ENCODE measurements at regions of chr9 and their contacts with region 1.

Region 1: DNA sequence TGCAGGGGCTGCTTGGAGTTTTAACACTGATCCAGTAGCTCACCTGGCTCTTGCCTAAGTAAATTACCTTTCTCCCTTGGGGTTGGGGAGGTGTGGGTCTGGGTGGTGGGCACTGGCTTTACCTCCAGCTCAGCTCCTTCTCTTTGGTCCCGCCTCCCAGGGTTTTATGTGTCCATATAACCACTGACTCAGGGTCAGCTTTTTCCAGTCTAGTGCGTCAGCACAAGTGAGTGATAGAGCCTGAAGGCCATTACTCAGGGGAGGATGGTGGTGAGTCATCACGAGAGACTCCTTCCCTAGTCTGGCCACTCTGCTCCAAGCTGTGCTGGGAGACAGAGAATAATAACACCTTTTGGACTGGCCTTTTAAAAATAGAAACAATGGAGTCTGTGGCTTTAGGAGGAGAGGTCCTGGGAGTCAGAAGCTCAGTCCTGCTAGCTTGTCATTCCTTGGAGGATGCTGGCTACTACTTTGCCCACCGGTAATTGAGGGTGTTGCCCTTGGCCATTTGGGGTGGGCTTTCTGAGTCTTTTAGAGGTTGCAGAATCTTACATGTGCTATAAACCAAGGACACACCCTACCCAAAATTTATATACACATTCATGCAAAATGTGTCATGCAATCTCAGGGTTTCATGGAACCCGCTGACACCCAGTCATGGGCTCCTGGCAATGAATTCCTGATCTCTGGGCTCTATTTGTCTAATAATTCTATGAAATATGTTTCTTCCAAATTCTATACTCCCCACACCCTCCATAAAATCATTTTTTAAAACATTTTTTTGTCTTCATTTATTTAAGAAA is 35.5 kb upstream of the ATP6V1G1 start:
- DNase-seq: peak in 1 of 9 experiments; percentile 15
- ATAC-seq: no peak
- H3K4me3 ChIP-seq: no peak overlapping the region
- H3K4me3 Mint-ChIP-seq: no peak overlapping the region
- H3K27ac ChIP-seq: no peak overlapping the region
- H3K27ac Mint-ChIP-seq: no peak overlapping the region
- H3K4me1 ChIP-seq: no peaks in the 10 kb centered on the region
- H3K4me1 Mint-ChIP-seq: no peaks in the 10 kb centered on the region
- H3K27me3 ChIP-seq: peaks cover 0 to 3% of the 10 kb centered on the region in 2 experiments
- H3K27me3 Mint-ChIP-seq: peaks cover 10% of the 10 kb centered on the region
- CTCF ChIP-seq: no peak

Region 2: GRCh38 chr9:113817171-113817570 is 734.9 kb before region 1 on chr9:
- CTCF ChIA-PET with region 1: no interaction called
- POLR2A ChIA-PET with region 1: no interaction called
- intact Hi-C with region 1: loop called in 1 of 2 experiments (anchors 10 kb)
- DNase-seq: no peak
- ATAC-seq: no peak
- H3K4me3 ChIP-seq: no peak overlapping the region
- H3K4me3 Mint-ChIP-seq: no peak overlapping the region
- H3K27ac ChIP-seq: no peak overlapping the region
- H3K27ac Mint-ChIP-seq: no peak overlapping the region
- H3K4me1 ChIP-seq: no peaks in the 10 kb centered on the region
- H3K4me1 Mint-ChIP-seq: no peaks in the 10 kb centered on the region
- H3K27me3 ChIP-seq: no peaks in the 10 kb centered on the region
- H3K27me3 Mint-ChIP-seq: peaks cover 26% of the 10 kb centered on the region
- CTCF ChIP-seq: no peak

Region 3: DNA sequence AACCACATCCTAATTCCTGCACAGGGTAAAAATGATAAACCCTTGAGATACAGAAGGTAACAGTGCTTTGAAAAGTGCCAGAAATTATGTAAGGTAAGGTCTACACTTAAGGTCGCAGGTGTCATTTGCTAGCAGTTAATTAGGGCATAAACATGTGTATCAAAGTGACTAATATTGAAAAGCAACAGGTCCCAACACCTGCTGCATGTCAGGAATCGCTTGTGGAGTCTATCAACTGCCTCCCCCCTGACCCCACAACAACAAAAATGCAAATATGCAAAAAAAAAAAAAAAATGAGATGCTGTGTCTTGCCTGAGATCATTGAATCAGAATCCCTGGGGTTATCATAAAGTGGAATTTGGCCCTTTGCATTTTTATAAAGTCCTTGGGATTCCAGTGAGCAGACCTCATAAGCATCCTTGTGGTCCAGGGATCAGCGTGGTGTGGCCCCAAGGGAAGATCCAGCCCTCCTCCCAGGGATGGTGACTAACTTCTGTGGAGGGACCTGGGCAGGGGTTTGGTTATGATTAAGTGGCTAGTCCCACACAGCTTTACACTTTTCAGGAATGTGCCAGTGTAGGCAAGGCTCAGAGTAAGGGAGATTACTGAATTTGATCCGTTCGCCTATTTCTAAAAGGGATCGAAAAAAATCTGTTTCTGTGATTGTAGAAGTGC is 470.8 kb after region 1 on chr9:
- CTCF ChIA-PET with region 1: no interaction called
- POLR2A ChIA-PET with region 1: no interaction called
- intact Hi-C with region 1: loop called in 1 of 2 experiments (anchors 10 kb)
- DNase-seq: no peak
- ATAC-seq: no peak
- H3K4me3 ChIP-seq: no peak overlapping the region
- H3K4me3 Mint-ChIP-seq: no peak overlapping the region
- H3K27ac ChIP-seq: no peak overlapping the region
- H3K27ac Mint-ChIP-seq: no peak overlapping the region
- H3K4me1 ChIP-seq: no peaks in the 10 kb centered on the region
- H3K4me1 Mint-ChIP-seq: no peaks in the 10 kb centered on the region
- H3K27me3 ChIP-seq: no peaks in the 10 kb centered on the region
- H3K27me3 Mint-ChIP-seq: peaks cover 5% of the 10 kb centered on the region
- CTCF ChIP-seq: no peak